Astrocyte of the cerebellum (primary cell): ENCODE measurements at regions of chr6 and their contacts with region 1.

Region 1: DNA sequence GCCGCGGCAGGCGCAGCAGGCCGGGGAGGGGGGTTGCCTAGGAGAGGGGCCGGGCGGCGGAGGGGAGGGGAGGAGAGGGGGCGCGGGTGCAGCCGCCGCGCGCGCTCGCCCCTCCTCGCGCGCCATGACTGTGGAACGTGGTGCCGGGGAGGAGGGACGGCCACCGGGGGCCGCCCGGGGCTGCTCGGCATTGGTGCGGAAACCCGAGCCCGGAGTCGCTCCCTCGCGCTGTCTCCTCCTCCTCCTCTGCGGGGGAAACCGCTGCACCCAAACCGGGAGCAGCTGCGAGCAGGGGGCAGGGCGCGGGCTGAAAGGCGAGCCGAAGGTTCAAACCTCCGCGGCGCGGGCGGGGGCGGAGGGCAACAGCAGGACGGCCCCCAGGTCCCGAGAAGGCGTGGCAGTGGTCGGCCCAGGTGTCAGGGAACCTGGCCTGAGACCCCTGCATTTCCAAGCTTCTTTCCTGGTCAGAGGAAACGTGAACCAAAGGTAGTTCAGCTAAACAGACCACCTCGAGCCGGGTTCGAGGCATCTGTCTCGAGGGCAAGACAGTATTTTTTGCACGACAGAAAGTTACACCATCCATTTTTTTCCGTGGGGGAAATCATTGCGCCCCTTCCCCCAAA is 1.4 kb upstream of the TRERF1 start:
- DNase-seq: no peak
- H3K4me3 ChIP-seq: peak overlapping the region; percentile 73
- CTCF ChIP-seq: no peak

Region 2: GRCh38 chr6:42417641-42418112 is 35.5 kb before region 1 on chr6:
- in situ Hi-C with region 1: loop called (anchors 5 kb)
- DNase-seq: peak; percentile 83
- H3K4me3 ChIP-seq: no peak overlapping the region
- CTCF ChIP-seq: no peak

Region 3: DNA sequence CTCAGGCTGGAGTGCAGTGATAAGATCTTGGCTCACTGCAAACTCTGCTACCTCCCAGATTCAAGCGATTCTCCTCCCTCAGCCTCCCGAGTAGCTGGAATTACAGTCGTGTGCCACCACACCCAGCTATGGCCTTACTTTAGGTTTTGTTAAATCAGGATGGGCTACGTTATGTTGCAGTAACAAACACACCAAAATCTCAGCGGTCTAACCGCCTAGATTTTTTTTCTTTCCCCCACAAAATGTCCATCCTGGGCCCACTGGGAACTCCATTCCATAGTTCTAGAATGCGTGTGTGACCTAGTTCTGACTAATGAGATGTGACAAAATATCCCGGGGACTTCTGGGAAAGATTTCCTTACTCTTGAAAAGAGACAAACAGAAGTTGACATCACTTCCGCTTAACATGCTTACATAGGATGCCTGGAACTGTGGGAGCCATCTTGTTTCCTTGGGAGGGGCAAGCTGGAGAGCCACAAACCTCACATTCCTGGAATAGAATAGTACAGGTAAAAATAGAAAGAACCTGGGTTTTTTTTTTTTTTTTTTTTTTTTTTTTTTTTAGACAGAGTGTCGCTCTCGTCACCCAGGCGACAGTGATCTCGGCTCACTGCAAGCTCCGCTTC is 40.9 kb after region 1 on chr6:
- in situ Hi-C with region 1: loop called (anchors 5 kb)
- DNase-seq: no peak
- H3K4me3 ChIP-seq: no peak overlapping the region
- CTCF ChIP-seq: no peak

Region 4: GRCh38 chr6:42547407-42548329 is 94.5 kb after region 1 on chr6:
- in situ Hi-C with region 1: no loop called
- DNase-seq: peak; percentile 51
- H3K4me3 ChIP-seq: peak overlapping the region; percentile 49
- CTCF ChIP-seq: peak; percentile 99